Calu3 (cell line): ENCODE measurements at regions of chr16 and their contacts with region 1.

Region 1: DNA sequence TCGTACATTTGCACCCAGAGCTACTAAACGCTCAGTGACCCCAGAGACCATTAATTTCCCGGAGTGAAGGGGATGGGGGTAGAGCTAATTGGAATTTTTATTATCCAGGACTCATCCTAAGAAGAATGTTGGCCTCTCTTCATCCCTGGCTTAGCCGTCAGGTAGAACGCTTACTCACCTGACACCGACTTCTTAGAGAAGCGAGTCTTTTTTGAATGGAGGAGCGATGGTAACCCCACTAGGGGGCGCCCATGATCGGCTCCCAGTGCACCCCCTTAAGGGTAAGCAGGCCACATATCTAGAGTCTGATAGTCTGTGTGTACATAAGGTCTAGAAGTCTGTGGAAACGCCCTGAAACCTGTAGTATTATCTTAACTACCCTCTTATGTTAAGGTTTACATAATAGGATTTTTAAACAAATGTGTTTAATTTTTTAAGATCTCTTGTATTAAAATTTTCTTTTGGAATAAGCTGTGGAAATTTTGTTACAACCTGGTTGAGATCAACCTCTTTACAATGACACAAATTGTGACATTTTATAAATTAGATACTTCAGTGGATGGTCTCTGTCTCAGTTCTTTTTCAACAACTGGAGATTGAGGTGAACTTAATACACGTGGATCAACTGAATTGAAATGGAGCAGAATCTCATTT is 229.8 kb downstream of the CPPED1 start:
- DNase-seq: peak; percentile 84
- H3K4me3 Mint-ChIP-seq: no peak overlapping the region
- H3K27ac Mint-ChIP-seq: no peak overlapping the region
- H3K4me1 Mint-ChIP-seq: peaks cover 9% of the 10 kb centered on the region
- H3K27me3 Mint-ChIP-seq: no peaks in the 10 kb centered on the region
- CTCF ChIP-seq: peak; percentile 85

Region 2: GRCh38 chr16:12455287-12455798 is 118.5 kb before region 1 on chr16:
- CTCF ChIA-PET with region 1: no interaction called
- intact Hi-C with region 1: loop called (anchors 5 kb)
- DNase-seq: peak; percentile 82
- H3K4me3 Mint-ChIP-seq: no peak overlapping the region
- H3K27ac Mint-ChIP-seq: no peak overlapping the region
- H3K4me1 Mint-ChIP-seq: peaks cover 5% of the 10 kb centered on the region
- H3K27me3 Mint-ChIP-seq: no peaks in the 10 kb centered on the region
- CTCF ChIP-seq: peak; percentile 92

Region 3: DNA sequence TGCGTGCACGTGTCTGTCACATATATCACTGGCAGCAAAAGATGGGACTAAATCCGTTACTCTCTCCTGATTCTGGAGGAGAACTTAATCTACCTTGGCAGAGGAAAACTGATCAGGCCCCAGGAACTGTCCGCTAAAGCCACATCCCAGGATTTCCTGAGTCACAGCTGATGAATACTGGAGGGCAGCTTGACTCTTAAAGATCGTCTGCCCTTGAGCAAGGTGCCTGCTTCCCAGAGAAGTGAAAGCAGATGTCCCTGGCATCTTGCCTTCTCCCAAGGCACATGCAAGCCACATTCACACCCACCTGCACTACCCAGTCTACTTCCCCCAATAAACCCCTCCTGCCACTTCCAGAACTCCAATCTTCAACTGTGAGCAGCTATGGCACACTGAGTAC is 130.1 kb after region 1 on chr16:
- CTCF ChIA-PET with region 1: no interaction called
- intact Hi-C with region 1: loop called (anchors 10 kb)
- DNase-seq: no peak
- H3K4me3 Mint-ChIP-seq: no peak overlapping the region
- H3K27ac Mint-ChIP-seq: no peak overlapping the region
- H3K4me1 Mint-ChIP-seq: no peaks in the 10 kb centered on the region
- H3K27me3 Mint-ChIP-seq: peaks cover 18% of the 10 kb centered on the region
- CTCF ChIP-seq: no peak